ENCODE measurements at regions of chr10 and their contacts with region 1.

Region 1: DNA sequence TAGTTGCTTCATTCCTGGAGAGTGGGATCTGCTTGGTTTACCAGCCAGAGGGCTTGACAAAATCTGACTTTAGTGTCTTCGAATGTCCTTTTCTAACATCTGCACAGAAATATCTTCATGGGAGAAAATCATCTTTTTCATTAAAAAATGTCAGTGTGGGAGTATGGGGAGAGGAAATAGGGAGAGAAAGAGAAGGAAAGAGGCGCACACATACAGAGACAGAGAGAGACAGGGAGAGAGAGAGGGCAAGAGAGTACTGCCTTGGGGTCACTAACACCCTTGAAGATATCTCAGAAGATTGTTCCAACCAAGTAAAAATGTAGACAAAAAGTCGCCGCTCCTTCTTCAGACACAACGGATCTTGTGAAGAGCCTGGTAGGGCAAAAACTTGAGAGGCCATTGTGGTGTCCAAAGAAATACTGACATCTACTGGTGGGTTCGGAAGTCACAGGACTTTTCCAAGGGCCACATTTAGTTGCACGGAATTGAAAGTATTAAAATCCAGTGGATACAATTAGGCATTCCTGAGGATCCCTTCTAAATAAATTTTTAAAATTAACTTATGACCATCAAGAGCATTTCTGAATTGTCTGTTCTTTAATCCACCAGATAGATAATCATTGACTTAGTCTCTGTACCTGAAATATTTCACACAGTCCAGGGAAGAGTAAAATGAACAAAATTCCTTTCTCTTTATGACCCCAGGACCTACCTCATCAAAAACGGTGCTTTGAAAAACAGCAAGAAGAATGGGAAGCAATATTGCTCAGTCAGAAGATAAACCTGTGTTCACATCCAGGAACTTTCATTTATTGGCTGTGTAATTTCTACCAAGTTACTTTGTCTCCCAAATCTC is 29.7 kb downstream of the VIM start:
- DNase-seq: peak in 1 of 3 donors; percentile 83
- ATAC-seq: peak; percentile 88
- H3K4me3 ChIP-seq: no peak overlapping the region
- H3K4me1 ChIP-seq: no peaks in the 10 kb centered on the region
- CTCF ChIP-seq: peak; percentile 64

Region 2: GRCh38 chr10:16843252-16843870 is 414.3 kb before region 1 on chr10:
- intact Hi-C with region 1: loop called (anchors 5 to 10 kb)
- DNase-seq: peak in 1 of 3 donors; percentile 19
- ATAC-seq: peak; percentile 68
- H3K4me3 ChIP-seq: no peak overlapping the region
- H3K4me1 ChIP-seq: no peaks in the 10 kb centered on the region
- CTCF ChIP-seq: no peak

Measured in mucosa of descending colon (tissue), 3 donors.